ENCODE measurements at regions of chr6 and their contacts with region 1.

Region 1: DNA sequence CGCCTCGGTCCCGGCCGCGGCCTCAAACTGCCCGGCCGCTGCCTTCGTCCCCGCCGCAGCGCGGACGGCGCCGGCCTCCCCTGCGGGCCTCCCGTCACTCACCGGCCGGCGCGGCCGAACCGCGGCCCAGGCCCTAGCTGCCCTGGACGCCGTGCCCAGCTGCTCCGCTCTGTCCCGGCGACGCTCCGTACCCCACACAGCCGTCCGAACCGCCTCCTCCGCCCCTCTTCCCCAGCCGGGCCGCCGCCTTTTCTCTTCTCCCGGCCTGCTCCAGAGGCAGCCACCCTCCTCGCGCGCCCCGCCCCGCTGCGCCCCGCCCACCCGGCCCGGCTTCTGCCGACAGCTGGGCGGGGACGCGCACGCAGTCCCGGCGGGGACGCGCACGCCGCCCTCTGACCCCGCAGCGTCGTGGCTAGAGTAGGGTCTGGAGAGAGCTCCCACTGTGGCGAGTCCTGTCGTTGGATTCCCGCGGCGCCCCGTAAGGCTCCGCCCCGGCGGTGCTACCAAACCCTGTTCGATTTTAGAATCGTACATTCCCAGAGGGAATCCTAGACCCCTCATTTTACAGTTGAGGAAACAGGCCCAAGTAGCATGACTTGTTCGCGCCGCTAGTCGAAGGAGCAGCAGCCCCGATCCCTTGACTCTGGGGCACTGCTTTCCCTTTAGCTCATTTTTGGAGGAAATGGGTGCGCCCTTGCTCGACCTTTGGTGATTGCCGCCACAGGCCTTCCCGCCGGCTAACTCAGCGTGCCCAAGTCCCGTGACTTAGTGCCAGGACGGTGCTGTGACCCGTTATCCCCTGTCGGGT is at the start of gene FBXO30:
- DNase-seq: peak; percentile 90 to 96
- ATAC-seq: peak; percentile 97
- H3K4me3 ChIP-seq: peak within 1 kb of the TSS; percentile 80 to 89
- H3K27ac ChIP-seq: peak within 1 kb of the TSS; percentile 88 to 91
- H3K4me1 ChIP-seq: peaks cover 2 to 8% of the 10 kb centered on the region in 2 donors
- H3K27me3 ChIP-seq: no peaks in the 10 kb centered on the region
- total RNA-seq, gene FBXO30: 12.0 to 17.2 TPM

Region 2: DNA sequence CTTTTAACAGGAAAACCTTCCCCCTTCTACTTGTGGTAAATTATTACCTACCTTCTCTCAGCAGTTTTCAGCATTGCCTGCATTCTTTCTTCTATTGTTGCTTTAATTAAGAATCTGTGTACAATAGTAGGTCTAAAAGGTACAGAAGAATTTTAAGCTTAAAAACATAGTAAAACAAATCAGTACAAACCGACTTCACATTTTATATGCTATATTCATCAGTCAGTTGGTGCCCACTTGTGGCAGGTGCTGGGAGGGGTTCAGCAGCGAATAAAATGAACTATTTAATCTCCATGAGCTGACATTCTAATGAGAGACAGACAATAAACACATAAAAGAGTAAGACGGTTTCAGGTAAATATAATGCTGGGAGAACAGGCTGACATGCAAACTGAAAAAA is 73.3 kb after region 1 on chr6:
- intact Hi-C with region 1: loop called in 1 of 2 experiments (anchors 5 kb)
- DNase-seq: peak in 1 of 2 donors; percentile 42
- ATAC-seq: no peak
- H3K4me3 ChIP-seq: no peak overlapping the region
- H3K27ac ChIP-seq: no peak overlapping the region
- H3K4me1 ChIP-seq: no peaks in the 10 kb centered on the region
- H3K27me3 ChIP-seq: no peaks in the 10 kb centered on the region

Region 3: DNA sequence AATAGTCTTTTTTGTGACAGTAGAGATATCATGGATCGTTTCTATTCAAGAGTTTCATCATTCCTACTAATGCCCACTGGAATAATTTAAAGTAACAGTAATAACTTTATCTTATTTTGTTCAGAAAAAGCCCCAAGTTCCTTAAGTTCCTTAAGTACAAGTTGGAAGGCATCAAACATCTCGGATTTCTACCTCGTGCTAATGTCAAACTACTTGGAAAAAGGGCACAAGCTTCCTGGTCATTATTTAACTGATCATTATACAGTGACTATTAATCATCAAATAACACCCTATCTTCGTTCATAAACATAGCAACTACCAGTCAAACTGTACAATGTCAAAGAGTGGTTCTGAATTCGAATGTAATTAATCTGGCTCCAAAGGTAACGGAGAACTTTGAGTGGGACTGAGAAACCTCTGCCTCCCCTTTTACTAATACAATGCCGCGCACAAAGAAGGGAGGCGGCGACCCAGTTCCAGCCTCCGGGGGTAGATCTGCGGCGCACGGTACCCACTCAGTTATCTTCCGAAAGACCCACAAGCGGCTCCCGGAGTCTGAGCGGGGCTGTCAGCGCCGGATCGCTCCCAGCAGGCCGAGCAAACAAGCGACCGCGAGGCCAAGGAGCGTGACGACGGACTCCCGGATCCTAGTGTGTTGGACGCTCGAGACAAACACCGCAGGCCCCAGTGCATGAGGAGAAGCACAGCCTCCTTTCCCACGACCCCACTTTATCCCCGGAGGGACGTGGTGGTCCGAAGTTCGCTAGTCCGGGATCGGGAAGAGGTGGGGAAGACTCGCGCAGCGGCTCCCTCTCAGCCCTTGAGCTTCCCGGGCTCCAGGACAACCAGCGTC is 148.7 kb after region 1 on chr6:
- intact Hi-C with region 1: loop called (anchors 10 kb)
- DNase-seq: peak; percentile 73 to 84
- ATAC-seq: peak; percentile 79
- H3K4me3 ChIP-seq: peak overlapping the region; percentile 55 to 70
- H3K27ac ChIP-seq: peak overlapping the region in 1 of 2 donors; percentile 69
- H3K4me1 ChIP-seq: no peaks in the 10 kb centered on the region
- H3K27me3 ChIP-seq: no peaks in the 10 kb centered on the region

Region 4: GRCh38 chr6:146009338-146009737 is 194.6 kb after region 1 on chr6:
- intact Hi-C with region 1: no loop called
- DNase-seq: no peak
- ATAC-seq: no peak
- H3K4me3 ChIP-seq: no peak overlapping the region
- H3K27ac ChIP-seq: no peak overlapping the region
- H3K4me1 ChIP-seq: no peaks in the 10 kb centered on the region
- H3K27me3 ChIP-seq: no peaks in the 10 kb centered on the region

Region 5: GRCh38 chr6:146410851-146411595 is 596.3 kb after region 1 on chr6:
- intact Hi-C with region 1: no loop called
- DNase-seq: no peak
- ATAC-seq: no peak
- H3K4me3 ChIP-seq: no peak overlapping the region
- H3K27ac ChIP-seq: no peak overlapping the region
- H3K4me1 ChIP-seq: no peaks in the 10 kb centered on the region
- H3K27me3 ChIP-seq: no peaks in the 10 kb centered on the region

Region 6: GRCh38 chr6:146892613-146893401 is 1078.1 kb after region 1 on chr6:
- intact Hi-C with region 1: no loop called
- DNase-seq: no peak
- ATAC-seq: no peak
- H3K4me3 ChIP-seq: no peak overlapping the region
- H3K27ac ChIP-seq: no peak overlapping the region
- H3K4me1 ChIP-seq: no peaks in the 10 kb centered on the region
- H3K27me3 ChIP-seq: no peaks in the 10 kb centered on the region